ENCODE measurements at regions of chr12 and their contacts with region 1.

Region 1: DNA sequence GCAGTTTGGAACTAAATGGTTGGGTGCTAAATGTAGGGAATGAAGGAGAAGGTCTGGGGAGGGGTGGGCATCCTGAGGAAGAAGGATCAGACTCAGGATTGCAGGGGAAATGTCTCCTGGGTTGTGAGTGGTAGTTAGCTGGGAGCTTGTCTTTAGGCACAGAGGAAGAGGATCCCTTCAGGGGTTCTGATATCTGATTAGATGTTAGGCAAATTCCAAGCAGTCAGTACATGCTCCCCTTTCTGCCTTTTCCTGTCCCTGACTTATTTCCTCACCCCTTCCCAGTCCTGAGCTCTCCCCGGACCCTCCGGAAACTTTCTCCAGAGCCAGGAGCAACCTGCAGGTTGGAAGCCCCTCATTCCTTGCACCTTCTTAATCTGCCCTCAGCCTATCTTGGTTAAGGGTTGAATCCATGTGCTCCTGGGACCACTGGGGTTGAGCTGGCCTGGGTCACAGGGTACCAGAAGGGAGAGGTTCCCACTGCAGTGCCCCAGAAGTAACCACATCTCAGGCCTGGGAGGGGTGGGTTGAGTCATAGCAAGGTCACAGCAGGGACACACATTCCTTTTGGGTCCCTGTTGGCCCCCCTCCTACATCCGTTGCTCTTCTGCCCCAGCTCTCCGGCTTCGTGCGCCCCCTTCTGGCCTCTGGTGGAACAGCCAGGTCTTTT is 1.6 kb downstream of the IGFBP6 start:
- DNase-seq: peak; percentile 92 to 96
- ATAC-seq: peak; percentile 82 to 86 (median 84)
- H3K4me3 ChIP-seq: peak overlapping the region; percentile 29
- H3K27ac ChIP-seq: peak overlapping the region; percentile 62
- H3K4me1 ChIP-seq: peaks cover 5% of the 10 kb centered on the region
- H3K27me3 ChIP-seq: no peaks in the 10 kb centered on the region
- CTCF ChIP-seq: peak; percentile 97

Region 2: DNA sequence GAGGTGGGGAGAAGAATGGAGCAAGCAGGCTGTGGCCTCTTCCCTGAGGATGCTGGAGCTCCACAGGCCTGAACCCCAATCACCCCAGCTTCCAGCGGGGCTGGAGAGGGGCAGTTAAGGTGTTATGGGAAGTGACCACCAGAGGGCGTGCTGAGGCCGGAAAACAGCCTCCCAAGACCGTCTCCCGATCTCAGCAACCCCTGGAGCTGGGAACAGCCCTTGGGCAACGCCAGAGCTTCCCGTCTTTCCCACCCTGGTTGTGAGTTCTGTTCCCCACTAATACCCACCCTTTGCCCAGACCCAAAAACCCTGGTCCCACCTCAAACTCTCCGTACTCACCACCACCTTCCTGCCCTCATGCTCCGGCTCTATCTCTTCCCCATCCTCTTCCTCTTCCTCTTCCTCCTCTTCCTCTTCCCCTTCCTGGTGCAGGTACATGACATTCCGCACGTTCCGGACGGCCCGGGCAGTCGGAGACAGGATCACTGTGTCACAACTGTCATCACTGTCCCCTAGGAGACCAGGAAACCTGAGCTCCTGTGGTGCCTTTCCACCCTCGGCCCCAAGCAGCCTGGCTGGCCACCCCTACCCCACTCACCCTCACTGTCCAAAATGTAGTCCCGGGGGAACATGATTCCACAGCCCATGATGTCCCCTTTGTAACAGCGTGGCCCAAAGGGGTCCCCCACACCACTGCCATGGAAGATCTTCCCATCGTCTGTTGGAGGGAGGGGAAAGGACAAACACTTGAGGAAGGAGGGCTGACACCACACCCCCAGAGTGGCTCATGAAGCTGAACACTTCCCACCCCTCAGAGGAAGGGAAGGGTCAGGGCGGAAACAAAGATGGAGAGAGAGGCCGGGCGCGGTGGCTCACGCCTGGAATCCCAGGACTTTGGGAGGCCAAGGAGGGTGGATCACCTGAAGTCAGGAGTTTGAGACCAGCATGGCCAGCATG is 32.9 kb before region 1 on chr12:
- intact Hi-C with region 1: loop called (anchors 1 to 2 kb)
- DNase-seq: peak; percentile 82 to 93
- ATAC-seq: peak; percentile 64 to 76 (median 72)
- H3K4me3 ChIP-seq: peak overlapping the region; percentile 22
- H3K27ac ChIP-seq: peak overlapping the region; percentile 61
- H3K4me1 ChIP-seq: peaks cover 20% of the 10 kb centered on the region
- H3K27me3 ChIP-seq: no peaks in the 10 kb centered on the region
- CTCF ChIP-seq: peak; percentile 90

Region 3: GRCh38 chr12:53241623-53242412 is 142.7 kb after region 1 on chr12:
- intact Hi-C with region 1: no loop called
- DNase-seq: peak in 1 of 2 donors; percentile 42
- ATAC-seq: no peak
- H3K4me3 ChIP-seq: no peak overlapping the region
- H3K27ac ChIP-seq: no peak overlapping the region
- H3K4me1 ChIP-seq: no peaks in the 10 kb centered on the region
- H3K27me3 ChIP-seq: peaks cover 0 to 11% (median 4%) of the 10 kb centered on the region in 3 donors
- CTCF ChIP-seq: no peak

Measured in psoas muscle (tissue), 8 donors.